ENCODE measurements at regions of chr1 and their contacts with region 1.

Region 1: GRCh38 chr1:34852677-34853217 is 6.8 kb downstream of the SMIM12 start:
- DNase-seq: peak; percentile 98
- H3K4me3 ChIP-seq: no peak overlapping the region
- H3K27ac ChIP-seq: no peak overlapping the region
- H3K4me1 ChIP-seq: peaks cover 13% of the 10 kb centered on the region
- H3K27me3 ChIP-seq: no peaks in the 10 kb centered on the region
- CTCF ChIP-seq: peak; percentile 95 to 99
- POLR2A ChIP-seq: peak; percentile 24

Region 2: GRCh38 chr1:34781071-34781843 is 71.5 kb before region 1 on chr1 and contains the start of gene GJB3:
- CTCF ChIA-PET with region 1: interaction called, 83 read pairs
- POLR2A ChIA-PET with region 1: no interaction called
- dilution Hi-C with region 1: no loop called
- intact Hi-C with region 1: loop called (anchors 1 kb)
- DNase-seq: no peak
- H3K4me3 ChIP-seq: no peak within 1 kb of the TSS
- H3K27ac ChIP-seq: no peak within 1 kb of the TSS
- H3K4me1 ChIP-seq: no peaks in the 10 kb centered on the region
- H3K27me3 ChIP-seq: peaks cover 27 to 33% of the 10 kb centered on the region in 2 experiments
- CTCF ChIP-seq: no peak
- POLR2A ChIP-seq: no peak
- total RNA-seq, gene GJB3: not detected in 2 replicates

Region 3: DNA sequence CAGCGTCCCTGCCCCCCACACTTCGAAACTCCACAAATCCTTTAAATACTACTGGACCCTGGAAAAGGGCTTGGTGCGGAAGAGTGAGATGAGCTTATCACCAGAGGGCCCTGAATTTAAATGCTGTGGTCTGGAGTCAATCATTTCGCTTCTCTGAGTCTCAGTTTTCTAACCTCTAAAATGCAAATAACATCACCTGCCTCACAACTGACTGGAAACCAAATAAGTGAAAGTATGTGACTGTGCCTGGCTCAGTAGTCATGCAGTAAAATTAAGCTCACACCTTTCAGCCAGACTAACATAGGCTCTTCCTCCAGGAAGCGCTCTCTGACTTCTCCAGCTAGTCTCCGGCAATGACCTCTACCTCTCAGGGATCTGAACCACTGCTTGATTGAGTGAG is 55.8 kb before region 1 on chr1:
- CTCF ChIA-PET with region 1: interaction called, 11 read pairs
- POLR2A ChIA-PET with region 1: no interaction called
- dilution Hi-C with region 1: no loop called
- intact Hi-C with region 1: no loop called
- DNase-seq: no peak
- H3K4me3 ChIP-seq: peak overlapping the region in 1 of 3 experiments; percentile 52
- H3K27ac ChIP-seq: no peak overlapping the region
- H3K4me1 ChIP-seq: no peaks in the 10 kb centered on the region
- H3K27me3 ChIP-seq: peaks cover 25 to 30% of the 10 kb centered on the region in 2 experiments
- CTCF ChIP-seq: no peak
- POLR2A ChIP-seq: no peak

Region 4: DNA sequence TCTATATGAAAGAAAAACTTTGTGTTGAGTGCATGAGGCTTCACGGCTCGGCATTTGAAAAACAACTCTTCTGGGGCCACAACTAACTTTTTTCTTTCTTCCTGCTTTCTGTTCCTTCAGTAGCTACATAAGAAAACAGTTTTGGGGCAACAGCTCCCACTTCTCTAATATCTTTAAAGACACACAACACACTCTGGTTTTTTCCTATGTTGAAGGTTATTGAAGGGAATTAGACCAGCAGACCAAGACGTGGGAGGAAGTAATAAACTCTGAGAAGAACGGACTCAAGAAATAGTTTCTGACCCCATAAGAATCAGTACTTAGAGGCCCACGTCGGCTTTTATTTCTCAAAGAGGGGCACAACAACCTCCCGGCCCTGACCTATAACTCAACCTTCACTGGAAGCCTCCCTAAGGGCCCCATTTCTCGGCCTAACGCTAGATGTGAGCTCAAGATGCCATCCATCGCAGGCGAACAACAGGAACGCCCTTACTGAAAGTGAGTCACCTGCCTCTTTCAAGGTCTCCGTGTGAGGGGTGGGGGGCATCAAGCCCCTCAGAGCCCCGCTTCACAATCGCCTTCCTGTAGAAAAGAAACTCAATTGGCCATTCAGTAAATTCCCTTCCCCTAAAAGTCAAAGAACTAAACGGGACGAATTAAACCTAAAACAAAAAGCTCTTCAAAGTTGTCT is 178.2 kb after region 1 on chr1:
- CTCF ChIA-PET with region 1: no interaction called
- POLR2A ChIA-PET with region 1: no interaction called
- dilution Hi-C with region 1: no loop called
- intact Hi-C with region 1: loop called (anchors 5 kb)
- DNase-seq: peak; percentile 73
- H3K4me3 ChIP-seq: peak overlapping the region; percentile 79 to 96 (median 85)
- H3K27ac ChIP-seq: peak overlapping the region; percentile 69
- H3K4me1 ChIP-seq: peaks cover 9% of the 10 kb centered on the region
- H3K27me3 ChIP-seq: no peaks in the 10 kb centered on the region
- CTCF ChIP-seq: no peak
- POLR2A ChIP-seq: no peak

Region 5: GRCh38 chr1:35298464-35298863 is 445.7 kb after region 1 on chr1:
- CTCF ChIA-PET with region 1: interaction called, 5 read pairs
- POLR2A ChIA-PET with region 1: no interaction called
- dilution Hi-C with region 1: no loop called
- intact Hi-C with region 1: loop called (anchors 10 kb)
- DNase-seq: peak; percentile 60
- H3K4me3 ChIP-seq: no peak overlapping the region
- H3K27ac ChIP-seq: no peak overlapping the region
- H3K4me1 ChIP-seq: no peaks in the 10 kb centered on the region
- H3K27me3 ChIP-seq: no peaks in the 10 kb centered on the region
- CTCF ChIP-seq: peak; percentile 25 to 40
- POLR2A ChIP-seq: no peak

Measured in endothelial cell of umbilical vein (primary cell).